Left colon (tissue), 2 donors: ENCODE measurements at regions of chr7 and their contacts with region 1.

Region 1: DNA sequence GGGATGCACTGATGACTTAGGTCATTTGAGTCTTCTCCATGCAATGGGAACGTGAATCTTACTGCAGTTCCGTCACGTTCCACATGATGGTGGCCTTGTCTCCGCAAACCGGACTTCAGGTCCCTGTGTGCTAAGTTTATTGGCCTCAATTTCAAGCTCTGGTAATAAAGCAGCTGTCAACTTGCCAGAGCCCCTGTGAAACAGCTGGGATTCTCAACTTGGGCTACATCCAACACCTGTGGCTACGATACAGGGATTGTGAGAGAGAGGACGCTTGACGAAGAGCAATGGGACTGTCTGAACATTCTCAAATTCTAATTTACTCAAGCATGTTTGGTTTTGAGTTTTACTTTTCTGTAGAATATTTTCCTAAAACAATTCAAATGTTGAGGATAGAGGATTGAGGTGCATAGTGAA is 174.2 kb downstream of the PTN start:
- DNase-seq: peak; percentile 33 to 41
- ATAC-seq: peak; percentile 76

Region 2: DNA sequence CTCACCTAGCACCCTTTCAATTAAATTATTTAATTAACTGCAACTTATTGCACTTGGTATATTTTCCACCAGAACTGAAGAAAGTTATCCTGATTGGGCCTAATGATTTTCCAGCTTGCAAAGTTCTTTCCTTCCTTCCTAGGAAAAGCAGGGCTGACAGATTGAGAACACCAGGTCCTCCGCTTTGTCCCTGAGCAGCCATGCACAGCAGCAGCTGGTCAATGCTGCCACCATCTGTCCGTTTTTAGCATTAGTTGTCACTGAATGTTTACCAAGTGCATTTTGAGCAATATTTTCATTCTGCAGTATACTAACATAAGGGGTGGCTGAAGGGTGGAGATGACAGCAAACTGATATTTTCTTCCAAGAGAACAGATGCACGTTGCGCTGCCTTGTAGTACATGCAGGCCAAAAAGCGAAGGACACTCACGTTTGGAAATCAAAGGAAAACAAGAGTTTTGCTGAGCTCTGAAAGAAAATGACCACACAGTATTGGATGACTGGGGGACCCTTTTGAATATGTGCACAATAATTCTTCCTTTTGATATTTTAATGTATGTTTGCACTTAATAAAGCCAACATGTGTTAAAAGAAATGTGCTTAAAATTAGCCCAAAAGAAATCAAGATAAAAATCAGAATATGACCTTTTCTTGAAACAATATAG is 423.1 kb after region 1 on chr7:
- intact Hi-C with region 1: loop called in 1 of 2 experiments (anchors 10 kb)
- DNase-seq: peak; percentile 40 to 45
- ATAC-seq: peak; percentile 94

Region 3: GRCh38 chr7:138500892-138501291 is 1331.6 kb after region 1 on chr7:
- intact Hi-C with region 1: no loop called
- DNase-seq: no peak
- ATAC-seq: no peak